Activated CD8-positive, alpha-beta T cell treated with anti-CD3 and anti-CD28 coated beads, Interleukin-2, amount 10 ng/mL, durations not matched to agents 7 days and 5 days (primary cell): ENCODE measurements at regions of chr11 and their contacts with region 1.

Region 1: GRCh38 chr11:108871152-108871551 is 206.3 kb downstream of the DDX10 start:
- DNase-seq: peak; percentile 49
- ATAC-seq: peak; percentile 39
- H3K4me3 Mint-ChIP-seq: no peak overlapping the region
- H3K27ac Mint-ChIP-seq: no peak overlapping the region
- H3K4me1 Mint-ChIP-seq: peaks cover 29% of the 10 kb centered on the region
- H3K27me3 Mint-ChIP-seq: no peaks in the 10 kb centered on the region

Region 2: DNA sequence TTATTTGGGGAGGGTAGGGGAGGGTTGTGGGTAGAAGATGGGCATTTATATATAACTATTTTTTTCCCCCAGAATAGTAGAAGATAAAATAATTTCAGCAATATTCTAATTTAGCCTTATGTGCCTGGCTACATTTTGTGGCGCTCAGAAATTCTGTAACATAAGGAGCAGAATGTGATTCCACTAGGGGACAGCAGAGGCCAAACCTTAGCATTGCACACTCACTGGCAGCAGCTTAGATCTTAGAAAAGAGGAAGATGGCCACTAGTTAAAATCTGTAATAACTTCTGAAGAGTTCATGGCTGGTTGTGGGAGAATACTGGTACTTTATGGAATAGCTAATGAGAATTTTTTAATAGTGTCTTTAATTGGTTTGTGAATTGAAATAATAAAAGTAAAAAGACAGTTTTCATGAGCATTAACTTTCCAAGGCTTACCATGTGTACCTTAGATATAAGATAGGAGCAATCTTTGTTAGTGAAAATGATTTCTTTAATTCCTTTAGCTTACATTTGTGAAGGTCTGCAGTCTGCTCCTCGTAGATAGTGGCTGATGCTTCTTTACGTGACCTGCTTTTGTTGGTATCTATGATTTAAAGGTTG is 173.2 kb before region 1 on chr11:
- CTCF ChIA-PET with region 1: interaction called, 18 read pairs
- POLR2A ChIA-PET with region 1: no interaction called
- DNase-seq: peak; percentile 59
- ATAC-seq: peak; percentile 76
- H3K4me3 Mint-ChIP-seq: no peak overlapping the region
- H3K27ac Mint-ChIP-seq: no peak overlapping the region
- H3K4me1 Mint-ChIP-seq: peaks cover 2% of the 10 kb centered on the region
- H3K27me3 Mint-ChIP-seq: no peaks in the 10 kb centered on the region

Region 3: DNA sequence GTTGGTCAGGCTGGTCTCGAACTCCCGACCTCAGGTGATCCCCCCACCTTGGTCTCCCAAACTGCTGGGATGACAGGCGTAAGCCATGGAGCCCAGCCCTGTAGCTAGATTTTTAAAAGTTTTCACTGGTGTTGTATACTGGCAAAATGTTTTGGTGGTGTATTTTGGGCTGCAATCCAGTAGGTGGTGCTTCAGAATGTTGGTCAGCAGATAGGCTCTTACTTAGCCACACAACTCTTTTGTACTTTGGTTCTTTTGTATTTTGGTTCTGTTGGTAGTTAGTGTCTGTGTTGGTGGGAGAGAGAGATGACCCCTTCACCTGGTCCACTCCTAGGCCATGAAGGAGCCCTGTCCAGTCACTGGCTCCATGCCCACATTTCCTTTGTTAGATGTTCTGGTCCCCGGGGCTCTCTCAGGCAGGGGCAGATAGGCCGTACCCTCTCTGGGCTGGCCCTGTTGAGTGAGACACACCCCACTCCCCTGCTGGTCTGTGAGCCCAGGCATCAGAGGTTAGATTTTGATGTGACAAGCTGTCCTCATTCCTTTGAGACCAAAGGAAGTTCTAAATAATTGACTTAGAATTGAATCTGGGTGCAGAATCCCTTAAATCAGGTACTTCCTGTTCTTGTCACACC is 82.5 kb before region 1 on chr11:
- CTCF ChIA-PET with region 1: interaction called, 10 read pairs
- POLR2A ChIA-PET with region 1: no interaction called
- DNase-seq: no peak
- ATAC-seq: no peak
- H3K4me3 Mint-ChIP-seq: no peak overlapping the region
- H3K27ac Mint-ChIP-seq: no peak overlapping the region
- H3K4me1 Mint-ChIP-seq: peaks cover 19% of the 10 kb centered on the region
- H3K27me3 Mint-ChIP-seq: no peaks in the 10 kb centered on the region